ENCODE measurements at regions of chr6 and their contacts with region 1.

Region 1: GRCh38 chr6:53999088-53999755 is 112.0 kb upstream of the MLIP start:
- DNase-seq: no peak
- H3K4me3 ChIP-seq: no peak overlapping the region
- H3K27ac ChIP-seq: no peak overlapping the region
- H3K4me1 ChIP-seq: no peaks in the 10 kb centered on the region
- H3K27me3 ChIP-seq: no peaks in the 10 kb centered on the region
- CTCF ChIP-seq: no peak

Region 2: GRCh38 chr6:53658992-53659391 is 340.2 kb before region 1 on chr6:
- CTCF ChIA-PET with region 1: no interaction called
- POLR2A ChIA-PET with region 1: interaction called, 11 read pairs
- intact Hi-C with region 1: no loop called
- DNase-seq: peak in 1 of 2 experiments; percentile 44
- H3K4me3 ChIP-seq: no peak overlapping the region
- H3K27ac ChIP-seq: peak overlapping the region; percentile 50
- H3K4me1 ChIP-seq: peaks cover 19% of the 10 kb centered on the region
- H3K27me3 ChIP-seq: no peaks in the 10 kb centered on the region
- CTCF ChIP-seq: no peak

Measured in PC-9 (cell line).